ENCODE measurements at regions of chr10 and their contacts with region 1.

Region 1: DNA sequence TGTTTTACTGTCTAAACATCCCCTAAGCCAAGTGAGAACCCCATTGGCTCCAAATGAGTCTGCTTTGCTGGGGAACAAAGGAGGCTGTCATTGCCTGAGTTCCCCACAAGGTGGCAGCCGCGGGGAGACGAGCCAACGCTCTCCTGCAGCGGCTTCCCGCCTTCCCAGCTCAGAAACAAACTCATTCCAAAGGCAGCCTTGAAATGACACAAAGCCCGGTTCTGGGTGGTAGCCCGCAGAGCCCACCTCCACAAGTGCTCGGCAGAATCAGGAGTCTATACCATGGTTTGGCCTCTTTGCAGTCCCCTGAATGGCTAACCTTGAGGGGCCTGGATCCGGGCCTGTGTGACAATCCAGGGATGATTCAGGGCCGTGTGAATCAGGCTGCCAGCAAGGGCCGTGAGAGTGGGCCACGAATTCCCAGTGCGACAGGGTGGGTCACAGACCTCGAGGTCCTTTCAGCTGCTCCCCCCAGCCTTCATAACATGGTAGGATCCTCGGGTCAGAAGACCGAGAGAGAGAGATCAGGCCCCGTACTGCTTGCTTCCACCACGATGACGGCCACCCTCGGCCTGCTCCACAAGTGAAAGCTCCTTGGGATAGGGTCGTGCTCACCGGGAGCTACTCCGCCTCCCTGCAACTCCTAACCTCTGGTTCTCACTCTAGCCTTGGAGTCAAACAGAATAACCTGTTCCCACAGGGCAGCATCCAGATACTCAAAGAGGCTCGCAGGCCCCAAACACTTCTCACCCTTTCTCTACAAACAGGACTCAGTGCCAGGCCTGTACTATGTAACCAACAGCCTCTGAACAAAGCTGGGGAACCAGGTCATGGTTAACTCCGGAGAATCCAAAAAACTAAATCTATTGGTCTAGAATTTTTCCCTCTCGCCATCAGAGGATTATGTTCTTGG is 79.6 kb downstream of the DLG5 start:
- DNase-seq: no peak
- H3K4me3 ChIP-seq: peak overlapping the region in 1 of 2 donors; percentile 5
- H3K27ac ChIP-seq: peak overlapping the region; percentile 77
- H3K4me1 ChIP-seq: peaks cover 44% of the 10 kb centered on the region
- H3K27me3 ChIP-seq: no peaks in the 10 kb centered on the region
- CTCF ChIP-seq: peak; percentile 87 to 98 (median 97)
- POLR2A ChIP-seq: no peak

Region 2: DNA sequence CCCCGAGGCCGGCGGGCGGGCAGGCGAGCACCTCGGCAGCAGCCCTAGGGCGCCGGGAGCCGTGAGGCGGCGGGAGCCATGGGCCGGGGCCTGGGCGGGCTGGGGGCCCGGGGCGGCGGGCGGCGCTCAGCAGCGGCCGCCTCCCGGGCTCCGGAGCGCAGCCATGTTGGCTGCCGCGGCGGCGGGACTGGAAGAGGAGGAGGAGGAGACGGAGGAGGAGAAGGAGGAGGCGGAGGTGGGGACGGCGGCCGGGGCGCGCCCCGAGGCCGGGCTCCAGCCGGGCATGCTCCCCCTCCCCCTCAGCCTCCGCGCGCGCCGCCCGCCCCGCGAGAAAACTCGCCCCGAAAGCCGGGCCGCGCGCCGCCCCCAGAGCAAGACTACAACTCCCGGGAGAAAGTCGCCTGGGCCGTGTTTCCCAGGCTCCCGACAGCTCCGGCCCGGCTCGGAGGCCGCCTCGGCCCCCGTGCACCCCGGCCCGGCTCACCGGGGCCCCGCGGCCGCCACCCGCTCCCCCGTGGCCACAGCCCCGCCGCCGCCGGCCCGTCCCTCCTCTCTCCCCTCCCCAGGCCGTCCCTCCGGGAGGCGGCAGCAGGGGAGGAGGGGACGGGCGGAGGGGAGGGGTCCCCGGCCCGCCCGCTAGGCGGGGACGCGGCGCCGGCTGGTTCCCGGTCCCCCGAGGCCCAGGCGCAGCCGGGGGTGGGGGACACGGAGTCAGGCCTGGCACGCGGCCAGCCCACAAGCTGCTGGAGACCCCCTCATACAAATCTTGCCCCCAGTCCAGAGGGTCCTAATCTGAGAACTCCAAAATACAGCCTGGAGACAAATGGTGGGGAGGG is 79.8 kb after region 1 on chr10 and contains the start of gene DLG5:
- intact Hi-C with region 1: loop called (anchors 10 kb)
- DNase-seq: no peak
- H3K4me3 ChIP-seq: peak within 1 kb of the TSS; percentile 81 to 82
- H3K27ac ChIP-seq: peak within 1 kb of the TSS; percentile 86
- H3K4me1 ChIP-seq: peaks cover 51% of the 10 kb centered on the region
- H3K27me3 ChIP-seq: no peaks in the 10 kb centered on the region
- CTCF ChIP-seq: no peak
- POLR2A ChIP-seq: peak in 1 of 2 donors; percentile 35
- total RNA-seq, gene DLG5: 57.5 TPM

Region 3: DNA sequence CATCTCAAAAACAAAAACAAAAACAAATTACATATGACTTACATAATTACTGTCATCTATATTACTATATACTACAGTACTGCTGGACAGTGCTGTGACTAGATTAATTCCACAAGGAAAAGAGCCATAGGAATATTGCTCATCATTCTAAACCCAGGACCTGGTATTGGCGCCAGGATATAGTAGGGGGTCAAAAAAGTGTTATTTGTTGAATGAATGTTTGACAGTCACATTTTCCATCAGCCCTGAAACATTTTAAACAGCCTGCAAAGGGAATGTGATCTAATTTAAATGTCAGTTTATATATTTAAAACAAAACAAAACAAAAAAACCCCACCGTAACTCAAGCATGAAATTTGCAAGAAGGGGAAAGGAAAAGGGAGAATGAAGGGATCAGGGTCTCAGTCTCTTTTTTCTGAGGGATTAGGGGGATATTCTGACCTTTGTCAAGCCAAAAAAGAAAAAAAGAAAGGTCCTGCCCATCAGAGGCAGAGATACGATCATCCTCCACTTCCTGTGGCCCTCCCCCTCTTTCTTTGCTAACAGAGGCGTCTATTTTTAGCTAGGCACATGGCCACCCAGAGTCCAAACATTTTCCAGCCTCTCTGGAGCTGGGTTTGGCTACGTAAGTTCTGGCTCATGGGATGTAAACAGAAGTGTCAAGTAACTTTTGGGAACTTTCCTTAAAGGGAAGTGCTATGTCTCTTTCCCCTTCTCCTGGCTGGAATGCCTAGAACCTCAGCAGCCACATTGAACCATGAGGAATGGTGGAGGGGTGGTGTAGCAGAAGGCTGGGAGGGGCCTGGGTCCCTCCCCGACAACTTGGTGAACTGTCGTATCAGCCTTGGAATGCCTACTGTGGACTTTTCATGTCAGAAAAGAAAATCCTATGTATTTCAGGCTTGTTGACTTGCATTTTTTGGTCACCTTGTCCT is 124.2 kb after region 1 on chr10:
- intact Hi-C with region 1: loop called (anchors 10 kb)
- DNase-seq: peak in 1 of 2 donors; percentile 93
- H3K4me3 ChIP-seq: no peak overlapping the region
- H3K27ac ChIP-seq: peak overlapping the region; percentile 87
- H3K4me1 ChIP-seq: peaks cover 37% of the 10 kb centered on the region
- H3K27me3 ChIP-seq: no peaks in the 10 kb centered on the region
- CTCF ChIP-seq: no peak
- POLR2A ChIP-seq: no peak